Transverse colon (tissue), 4 donors: ENCODE measurements at regions of chr9 and their contacts with region 1.

Region 1: GRCh38 chr9:18910916-18911315 is 122.1 kb downstream of the SAXO1 start:
- DNase-seq: no peak
- H3K4me3 ChIP-seq: no peak overlapping the region
- H3K27ac ChIP-seq: no peak overlapping the region
- H3K4me1 ChIP-seq: no peaks in the 10 kb centered on the region
- H3K27me3 ChIP-seq: no peaks in the 10 kb centered on the region
- CTCF ChIP-seq: no peak
- EP300 ChIP-seq: no peak
- POLR2A ChIP-seq: no peak

Region 2: GRCh38 chr9:17291766-17292165 is 1619.2 kb before region 1 on chr9:
- in situ Hi-C with region 1: no loop called
- intact Hi-C with region 1: no loop called
- DNase-seq: no peak
- H3K4me3 ChIP-seq: no peak overlapping the region
- H3K27ac ChIP-seq: no peak overlapping the region
- H3K4me1 ChIP-seq: no peaks in the 10 kb centered on the region
- H3K27me3 ChIP-seq: no peaks in the 10 kb centered on the region
- CTCF ChIP-seq: no peak
- EP300 ChIP-seq: no peak
- POLR2A ChIP-seq: no peak

Region 3: DNA sequence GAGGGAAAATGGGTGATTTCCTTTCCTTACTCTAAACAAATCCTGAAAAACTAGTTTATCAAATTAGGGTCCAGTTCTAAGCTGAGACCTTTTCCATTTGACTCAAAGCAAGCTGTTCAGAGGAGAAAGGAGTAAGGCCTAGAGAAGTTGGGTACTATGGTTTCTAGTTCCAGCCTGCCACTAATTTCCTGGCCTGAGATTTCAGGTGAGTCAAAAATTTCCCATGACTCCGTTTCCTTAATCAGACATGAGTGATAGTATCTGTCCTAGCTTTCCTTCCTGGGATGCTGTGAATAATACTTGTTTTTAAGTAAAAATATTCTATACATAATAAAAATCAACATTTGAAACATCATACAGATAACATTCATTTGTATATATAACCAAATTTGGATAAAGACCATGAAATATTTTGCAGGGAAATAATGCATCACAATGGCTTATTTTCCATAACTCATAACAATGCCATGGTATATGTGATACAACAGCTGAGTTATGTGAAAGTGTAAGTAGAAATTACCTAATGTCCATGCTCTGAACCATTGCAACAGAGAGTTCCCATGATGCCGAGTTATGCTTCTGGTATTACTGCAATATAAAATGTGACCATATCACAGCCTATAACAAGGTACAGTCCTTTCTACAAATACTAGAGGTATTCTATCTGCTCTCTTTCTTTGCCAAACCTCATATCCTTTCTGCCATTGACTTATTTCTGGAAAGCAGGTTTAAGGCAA is 1568.7 kb after region 1 on chr9:
- in situ Hi-C with region 1: no loop called
- intact Hi-C with region 1: loop called (anchors 5 kb)
- DNase-seq: no peak
- H3K4me3 ChIP-seq: no peak overlapping the region
- H3K27ac ChIP-seq: no peak overlapping the region
- H3K4me1 ChIP-seq: peaks cover 0 to 25% (median 10%) of the 10 kb centered on the region in 4 donors
- H3K27me3 ChIP-seq: no peaks in the 10 kb centered on the region
- CTCF ChIP-seq: no peak
- EP300 ChIP-seq: no peak
- POLR2A ChIP-seq: no peak